ENCODE measurements at regions of chr6 and their contacts with region 1.

Region 1: GRCh38 chr6:122651604-122652003 is 41.4 kb downstream of the PKIB start:
- DNase-seq: no peak
- ATAC-seq: no peak
- H3K4me3 Mint-ChIP-seq: no peak overlapping the region
- H3K27ac Mint-ChIP-seq: no peak overlapping the region
- H3K4me1 Mint-ChIP-seq: no peaks in the 10 kb centered on the region
- H3K27me3 Mint-ChIP-seq: no peaks in the 10 kb centered on the region
- CTCF ChIP-seq: no peak

Region 2: GRCh38 chr6:120938876-120939472 is 1712.6 kb before region 1 on chr6:
- CTCF ChIA-PET with region 1: no interaction called
- POLR2A ChIA-PET with region 1: no interaction called
- intact Hi-C with region 1: no loop called
- DNase-seq: no peak
- ATAC-seq: peak; percentile 86
- H3K4me3 Mint-ChIP-seq: no peak overlapping the region
- H3K27ac Mint-ChIP-seq: peak overlapping the region; percentile 31
- H3K4me1 Mint-ChIP-seq: peaks cover 29% of the 10 kb centered on the region
- H3K27me3 Mint-ChIP-seq: no peaks in the 10 kb centered on the region
- CTCF ChIP-seq: no peak

Region 3: DNA sequence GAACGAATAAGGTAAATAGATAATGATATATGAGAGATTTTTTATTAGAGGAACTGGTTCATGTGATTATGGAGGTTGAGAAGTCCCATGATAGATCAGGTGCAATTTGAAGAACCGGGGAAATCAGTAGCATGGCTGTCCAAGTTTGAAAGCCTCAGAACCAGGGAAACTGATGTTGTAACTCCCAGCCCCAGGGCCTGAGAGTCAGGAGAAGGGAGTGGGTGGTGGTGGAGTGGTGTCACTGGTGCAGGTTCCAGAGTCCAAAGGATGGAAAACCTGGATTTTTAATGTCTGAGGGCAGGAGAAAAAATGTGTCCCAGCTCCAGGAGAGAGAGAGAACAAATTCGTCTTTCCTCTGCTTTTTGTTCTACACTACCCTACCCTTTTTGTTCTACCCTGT is 674.0 kb before region 1 on chr6:
- CTCF ChIA-PET with region 1: no interaction called
- POLR2A ChIA-PET with region 1: no interaction called
- intact Hi-C with region 1: no loop called
- DNase-seq: no peak
- ATAC-seq: no peak
- H3K4me3 Mint-ChIP-seq: no peak overlapping the region
- H3K27ac Mint-ChIP-seq: no peak overlapping the region
- H3K4me1 Mint-ChIP-seq: no peaks in the 10 kb centered on the region
- H3K27me3 Mint-ChIP-seq: no peaks in the 10 kb centered on the region
- CTCF ChIP-seq: no peak

Region 4: DNA sequence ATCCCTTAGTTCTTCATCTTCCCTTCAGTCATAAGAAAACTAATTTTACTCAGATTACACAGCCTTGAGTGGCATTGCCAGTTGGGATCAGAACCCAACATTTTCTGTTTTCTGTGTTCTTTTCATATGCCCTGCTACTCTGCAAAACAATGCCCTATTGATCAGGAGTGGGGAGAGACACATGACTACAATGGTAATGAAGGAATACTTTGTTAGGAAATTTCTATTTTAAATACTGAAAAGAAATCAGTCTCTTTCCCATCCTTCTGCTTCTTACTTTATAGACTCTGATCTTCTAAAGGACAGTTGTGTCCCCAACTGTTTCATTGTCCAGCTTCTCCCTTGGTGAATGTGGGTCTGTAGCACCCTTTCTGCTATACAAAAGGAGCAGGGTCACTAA is 46.9 kb before region 1 on chr6:
- CTCF ChIA-PET with region 1: no interaction called
- POLR2A ChIA-PET with region 1: no interaction called
- intact Hi-C with region 1: loop called (anchors 1 kb)
- DNase-seq: no peak
- ATAC-seq: no peak
- H3K4me3 Mint-ChIP-seq: no peak overlapping the region
- H3K27ac Mint-ChIP-seq: no peak overlapping the region
- H3K4me1 Mint-ChIP-seq: peaks cover 4% of the 10 kb centered on the region
- H3K27me3 Mint-ChIP-seq: peaks cover 9% of the 10 kb centered on the region
- CTCF ChIP-seq: no peak

Measured in activated B cell treated with CpG ODN at 0.5 μM for 24 hours (primary cell).